ENCODE measurements at regions of chr12 and their contacts with region 1.

Region 1: DNA sequence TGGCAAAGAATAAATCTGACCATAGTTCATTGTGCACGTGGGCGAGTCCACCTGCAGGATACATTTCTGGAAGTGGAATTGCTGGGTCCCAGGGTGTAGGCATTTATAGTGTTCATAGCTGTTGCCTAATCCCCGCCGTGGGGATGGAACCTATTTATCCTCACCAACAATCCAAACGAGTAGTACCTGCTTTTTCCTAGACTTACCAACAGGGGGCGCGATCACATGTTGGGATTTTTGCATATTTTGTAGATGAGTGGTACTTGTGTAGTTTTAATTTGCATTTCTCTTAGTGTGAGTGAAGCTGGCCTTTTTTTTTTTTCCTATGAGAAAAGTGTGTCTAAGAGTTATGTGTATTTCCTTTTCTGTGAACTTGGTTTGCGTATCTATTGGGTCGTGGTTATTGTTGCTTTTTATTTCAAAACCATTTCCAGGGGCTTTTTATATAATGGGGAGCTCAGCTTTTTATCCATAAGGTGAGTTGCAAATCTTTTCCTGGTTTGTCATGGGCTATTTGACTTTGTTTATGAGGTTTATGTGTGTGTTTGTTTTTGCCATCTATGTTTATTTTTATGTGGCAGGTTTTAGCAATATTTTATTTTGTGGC is 67.2 kb downstream of the CCDC92 start:
- DNase-seq: peak; percentile 50
- H3K4me3 Mint-ChIP-seq: no peak overlapping the region
- H3K27ac Mint-ChIP-seq: no peak overlapping the region
- H3K4me1 Mint-ChIP-seq: peaks cover 7% of the 10 kb centered on the region
- H3K27me3 Mint-ChIP-seq: peaks cover 6% of the 10 kb centered on the region

Region 2: GRCh38 chr12:123938679-123939480 is 33.5 kb after region 1 on chr12:
- intact Hi-C with region 1: loop called (anchors 2 kb)
- DNase-seq: no peak
- H3K4me3 Mint-ChIP-seq: peak overlapping the region; percentile 68
- H3K27ac Mint-ChIP-seq: peak overlapping the region; percentile 70
- H3K4me1 Mint-ChIP-seq: peaks cover 21% of the 10 kb centered on the region
- H3K27me3 Mint-ChIP-seq: no peaks in the 10 kb centered on the region

Region 3: DNA sequence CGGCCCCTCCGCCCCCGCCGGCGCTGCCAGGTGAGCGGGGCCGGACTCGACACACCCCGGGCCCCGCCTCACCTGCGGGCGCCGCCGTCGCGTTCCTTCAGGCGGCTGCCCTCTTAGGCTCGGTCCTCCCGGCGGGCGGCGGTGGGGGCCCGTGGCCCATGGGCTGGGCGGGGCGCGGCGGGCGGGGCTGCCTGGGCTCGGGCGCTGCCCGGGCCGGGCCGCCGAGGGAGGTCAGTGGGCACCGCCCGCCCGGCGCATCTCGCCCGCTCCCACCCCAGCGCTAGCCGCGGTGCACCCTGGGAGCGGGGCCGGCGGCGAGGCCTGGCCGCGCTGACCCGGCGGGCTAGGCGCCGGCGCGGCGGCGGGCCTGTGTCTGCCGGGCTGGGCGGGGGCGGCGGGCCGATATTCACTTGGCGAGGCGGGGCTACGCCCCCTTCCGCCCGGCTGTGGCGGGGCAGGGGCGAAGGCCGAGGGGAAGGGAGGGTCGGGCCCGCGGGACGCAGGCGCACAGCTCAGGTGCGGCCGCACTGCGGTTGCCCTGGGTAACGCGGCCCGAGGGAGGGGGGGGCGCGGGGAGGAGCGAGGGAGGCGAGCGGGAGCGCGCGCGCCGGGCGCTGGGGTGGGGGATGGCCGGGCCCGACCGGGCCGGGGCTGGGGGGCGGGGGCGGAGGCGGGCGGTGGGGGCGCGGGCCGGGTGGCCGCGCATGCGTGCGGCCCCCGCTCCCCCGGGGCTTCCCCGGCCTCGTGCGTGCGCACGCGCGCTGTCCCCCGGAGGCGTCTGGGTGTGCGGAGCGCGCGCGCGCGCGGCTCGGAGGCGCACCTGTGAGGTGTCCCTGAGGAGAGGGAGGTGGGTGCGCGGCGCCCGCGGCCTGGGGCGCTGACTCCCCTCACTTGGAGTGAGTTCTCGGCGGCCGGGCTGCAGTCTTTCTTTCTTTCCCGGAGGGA is 67.3 kb after region 1 on chr12 and contains the starts of genes CCDC92 and ZNF664:
- intact Hi-C with region 1: loop called (anchors 1 kb)
- DNase-seq: peak; percentile 91
- H3K4me3 Mint-ChIP-seq: peak within 1 kb of the TSS; percentile 91
- H3K27ac Mint-ChIP-seq: peak within 1 kb of the TSS; percentile 78
- H3K4me1 Mint-ChIP-seq: peaks cover 53% of the 10 kb centered on the region
- H3K27me3 Mint-ChIP-seq: peaks cover 15% of the 10 kb centered on the region
- total RNA-seq, gene CCDC92: 7.7 and 8.3 TPM in 2 replicates
- total RNA-seq, gene ZNF664: 66.9 and 68.1 TPM in 2 replicates

Region 4: DNA sequence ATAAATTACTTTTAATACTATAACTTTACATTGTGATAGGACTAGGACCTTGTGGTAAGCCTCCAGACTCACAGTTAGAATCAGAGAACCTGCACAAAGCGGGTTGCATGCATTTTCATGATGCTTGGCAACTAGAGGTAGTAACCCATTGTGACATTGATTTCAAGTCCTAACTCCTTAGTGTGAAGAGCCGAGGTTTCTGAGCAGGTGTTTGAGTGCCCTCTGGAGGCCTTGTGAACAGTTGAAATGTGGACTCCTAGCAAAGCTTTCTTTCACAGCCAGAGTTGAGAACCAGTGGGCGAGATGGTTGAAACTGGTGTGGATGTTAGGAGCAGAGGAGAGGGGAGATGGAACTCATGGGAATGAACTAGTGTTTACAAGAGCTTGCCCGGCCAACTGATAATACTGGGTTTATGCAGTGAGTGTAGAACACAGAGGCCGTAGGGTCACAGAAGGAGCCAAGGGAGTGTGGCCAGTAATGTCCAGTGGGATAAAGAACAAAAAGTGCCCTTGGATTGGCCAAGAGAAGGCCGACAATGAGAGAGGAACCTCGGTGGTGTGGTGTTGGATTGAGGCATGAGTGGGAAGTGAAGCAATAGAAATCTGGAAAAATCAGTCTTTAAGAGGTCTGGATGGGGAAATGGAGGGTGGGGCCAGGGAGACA is 78.5 kb after region 1 on chr12:
- intact Hi-C with region 1: loop called (anchors 1 kb)
- DNase-seq: peak; percentile 25
- H3K4me3 Mint-ChIP-seq: no peak overlapping the region
- H3K27ac Mint-ChIP-seq: no peak overlapping the region
- H3K4me1 Mint-ChIP-seq: peaks cover 13% of the 10 kb centered on the region
- H3K27me3 Mint-ChIP-seq: no peaks in the 10 kb centered on the region

Region 5: DNA sequence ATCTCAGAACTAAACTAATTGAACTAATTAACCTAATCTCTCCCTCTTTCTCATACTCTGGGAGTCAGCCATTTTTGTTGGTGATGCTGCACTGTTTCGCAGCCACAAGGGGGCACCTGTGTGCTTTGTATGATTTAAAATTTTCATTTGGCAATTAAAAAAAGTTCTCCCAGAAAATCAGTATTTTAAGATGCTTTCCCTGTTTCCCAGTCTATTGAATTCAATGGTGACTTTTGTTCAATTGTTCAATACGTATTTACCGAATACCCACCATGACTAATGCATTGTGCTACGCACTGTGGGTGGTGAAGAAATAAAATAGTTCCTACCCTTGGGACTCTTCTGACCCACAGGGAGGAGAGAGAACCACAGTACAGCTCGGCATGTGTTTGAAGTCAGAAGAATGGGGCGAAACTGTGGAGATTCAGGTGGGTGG is 131.3 kb after region 1 on chr12:
- intact Hi-C with region 1: loop called (anchors 1 kb)
- DNase-seq: no peak
- H3K4me3 Mint-ChIP-seq: no peak overlapping the region
- H3K27ac Mint-ChIP-seq: no peak overlapping the region
- H3K4me1 Mint-ChIP-seq: no peaks in the 10 kb centered on the region
- H3K27me3 Mint-ChIP-seq: peaks cover 14% of the 10 kb centered on the region

Measured in activated T-helper 1 cell treated with anti-CD3 and anti-CD28 coated beads, Interleukin-12 subunit alpha, Interleukin-12 subunit beta, Interleukin-2, Interleukin-4 antibody, amounts not matched to agents 30 ng/mL and 10 ng/mL and 1 ng/mL, durations not matched to agents 14 hours and 24 hours and 36 hours (primary cell).